A673 (cell line): ENCODE measurements at regions of chr6 and their contacts with region 1.

Region 1: GRCh38 chr6:112951829-112952228 is 604.7 kb downstream of the RFPL4B start:
- DNase-seq: no peak
- H3K4me3 ChIP-seq: no peak overlapping the region
- H3K27ac ChIP-seq: no peak overlapping the region
- H3K4me1 ChIP-seq: no peaks in the 10 kb centered on the region
- H3K27me3 ChIP-seq: no peaks in the 10 kb centered on the region
- CTCF ChIP-seq: no peak

Region 2: GRCh38 chr6:112321941-112322424 is 629.8 kb before region 1 on chr6:
- CTCF ChIA-PET with region 1: no interaction called
- POLR2A ChIA-PET with region 1: no interaction called
- intact Hi-C with region 1: loop called (anchors 5 kb)
- DNase-seq: peak; percentile 14
- H3K4me3 ChIP-seq: no peak overlapping the region
- H3K27ac ChIP-seq: no peak overlapping the region
- H3K4me1 ChIP-seq: no peaks in the 10 kb centered on the region
- H3K27me3 ChIP-seq: peaks cover 74% of the 10 kb centered on the region
- CTCF ChIP-seq: no peak